GM10248 (cell line): ENCODE measurements at regions of chr1 and their contacts with region 1.

Region 1: GRCh38 chr1:78132174-78132947 is 86.6 kb downstream of the GIPC2 start:
- DNase-seq: no peak
- CTCF ChIP-seq: no peak

Region 2: GRCh38 chr1:78114034-78114956 is 18.1 kb before region 1 on chr1:
- CTCF ChIA-PET with region 1: interaction called, 25 read pairs
- POLR2A ChIA-PET with region 1: no interaction called
- DNase-seq: peak; percentile 61
- CTCF ChIP-seq: peak; percentile 86

Region 3: DNA sequence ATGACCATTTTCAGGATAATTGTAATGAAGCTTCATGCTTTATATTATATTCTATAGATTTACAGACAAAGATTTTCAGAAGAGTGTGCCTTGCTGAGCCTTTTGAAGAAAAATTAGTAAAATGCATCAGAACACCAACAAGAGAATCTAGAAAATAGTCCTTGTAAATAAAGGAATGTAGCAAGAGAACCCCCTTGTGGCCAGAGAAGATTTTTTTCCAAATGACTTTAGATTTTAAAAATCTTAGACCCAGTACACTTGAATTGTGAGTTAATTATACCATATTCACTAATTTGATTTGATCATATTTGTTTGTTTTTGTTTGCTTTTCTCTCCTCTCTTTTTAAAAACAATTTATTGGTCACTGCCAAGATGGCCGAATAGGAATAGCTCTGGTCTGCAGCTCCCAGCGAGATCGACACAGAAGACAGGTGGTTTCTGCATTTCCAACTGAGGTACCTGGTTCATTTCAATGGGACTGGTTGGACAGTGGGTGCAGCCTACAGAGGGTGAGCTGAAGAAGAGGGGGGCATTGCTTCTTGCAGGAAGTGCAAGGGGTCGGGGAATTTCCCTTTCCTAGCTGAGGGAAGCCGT is 475.1 kb after region 1 on chr1:
- CTCF ChIA-PET with region 1: interaction called, 39 read pairs
- POLR2A ChIA-PET with region 1: no interaction called
- DNase-seq: peak; percentile 13
- CTCF ChIP-seq: peak; percentile 42

Region 4: GRCh38 chr1:78676347-78676982 is 544.1 kb after region 1 on chr1:
- CTCF ChIA-PET with region 1: interaction called, 10 read pairs
- POLR2A ChIA-PET with region 1: no interaction called
- DNase-seq: peak; percentile 35
- CTCF ChIP-seq: peak; percentile 85